CD4-positive, alpha-beta memory T cell (primary cell): ENCODE measurements at regions of chr17 and their contacts with region 1.

Region 1: DNA sequence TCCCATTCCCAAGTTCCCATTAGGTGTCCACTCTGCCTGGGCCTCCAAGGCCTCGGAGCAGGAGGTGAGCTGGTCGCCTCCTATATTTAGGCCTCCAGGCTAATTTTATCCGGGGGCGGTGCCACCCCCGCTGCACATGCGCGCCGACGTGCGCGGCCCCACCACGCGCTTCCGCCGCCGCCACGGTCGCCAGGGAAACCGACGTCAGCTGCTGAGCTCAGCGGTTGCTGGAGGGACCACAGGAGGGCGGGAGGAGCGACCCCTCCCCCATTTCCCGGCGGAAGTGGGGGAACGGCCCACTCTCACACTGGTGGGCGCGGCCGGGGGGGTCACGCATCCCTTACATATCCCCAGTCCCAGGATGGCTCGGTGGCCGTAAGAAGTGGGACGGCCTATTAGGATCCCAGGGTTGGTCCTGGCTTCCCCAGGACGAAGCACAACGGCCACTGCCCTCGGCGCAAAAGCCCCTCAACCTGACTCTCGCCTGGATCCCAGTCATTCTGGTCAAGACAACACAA is 1.0 kb downstream of the PER1 start:
- DNase-seq: peak; percentile 92 to 96 (median 94)
- H3K4me3 ChIP-seq: peak overlapping the region; percentile 74 to 89
- H3K4me3 Mint-ChIP-seq: peak overlapping the region in 7 of 8 donors; percentile 91 to 98 (median 93)
- H3K27ac ChIP-seq: peak overlapping the region; percentile 100
- H3K27ac Mint-ChIP-seq: no peak overlapping the region
- H3K4me1 ChIP-seq: peaks cover 54% of the 10 kb centered on the region
- H3K4me1 Mint-ChIP-seq: peaks cover 30 to 58% (median 39%) of the 10 kb centered on the region in 4 donors
- H3K27me3 ChIP-seq: no peaks in the 10 kb centered on the region
- H3K27me3 Mint-ChIP-seq: no peaks in the 10 kb centered on the region

Region 2: DNA sequence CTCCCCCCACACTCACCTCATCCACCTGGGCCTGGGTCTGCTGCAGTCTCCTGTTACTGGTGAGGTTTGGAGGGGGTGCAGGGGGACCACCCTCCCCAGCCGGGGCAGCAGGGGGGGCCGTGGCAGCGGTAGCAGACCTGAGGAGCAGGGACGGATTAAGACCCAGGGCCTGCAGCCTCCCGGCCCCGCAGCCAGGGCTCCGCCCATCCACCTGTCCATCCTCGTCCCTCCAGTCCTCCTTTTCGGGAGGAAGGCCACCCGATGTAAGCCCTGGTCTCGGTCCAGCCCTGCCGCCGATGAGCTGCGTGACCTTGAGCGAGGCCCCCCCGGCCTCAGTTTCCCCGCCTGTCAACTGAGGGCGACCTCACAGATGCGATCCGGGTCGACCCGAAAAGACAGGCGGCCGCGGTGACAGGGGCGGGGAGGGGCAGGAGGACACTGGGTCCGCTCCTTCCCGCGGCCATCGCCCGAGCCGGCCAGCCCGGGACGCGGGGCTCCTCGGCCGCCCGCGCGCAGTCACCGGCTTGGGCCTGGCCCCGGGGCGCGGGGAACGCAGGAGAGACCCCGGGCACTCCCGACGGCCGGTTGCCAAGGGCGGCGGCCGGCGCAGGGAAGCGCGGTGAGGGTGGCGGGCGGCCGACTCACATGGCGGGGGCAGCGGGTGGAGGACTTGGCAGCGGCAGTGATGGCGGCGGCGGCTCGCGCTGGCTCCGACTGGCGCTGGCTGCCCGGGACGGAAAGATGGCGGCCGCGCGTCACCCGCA is 11.2 kb after region 1 on chr17 and contains the start of gene VAMP2:
- CTCF ChIA-PET with region 1: interaction called, 5 read pairs
- POLR2A ChIA-PET with region 1: interaction called, 43 read pairs
- intact Hi-C with region 1: no loop called
- DNase-seq: peak; percentile 84 to 90 (median 89)
- H3K4me3 ChIP-seq: peak within 1 kb of the TSS; percentile 80 to 98
- H3K4me3 Mint-ChIP-seq: peak within 1 kb of the TSS; percentile 91 to 93 (median 91)
- H3K27ac ChIP-seq: peak within 1 kb of the TSS; percentile 100
- H3K27ac Mint-ChIP-seq: peak within 1 kb of the TSS; percentile 95 to 99 (median 98)
- H3K4me1 ChIP-seq: peaks cover 68% of the 10 kb centered on the region
- H3K4me1 Mint-ChIP-seq: peaks cover 47 to 66% (median 53%) of the 10 kb centered on the region in 4 donors
- H3K27me3 ChIP-seq: no peaks in the 10 kb centered on the region
- H3K27me3 Mint-ChIP-seq: no peaks in the 10 kb centered on the region
- total RNA-seq, gene VAMP2: 190 to 203 TPM